ENCODE measurements at regions of chr12 and their contacts with region 1.

Region 1: GRCh38 chr12:2034633-2035430 is 18.0 kb upstream of the CACNA1C start:
- DNase-seq: peak; percentile 94
- H3K4me3 ChIP-seq: peak overlapping the region; percentile 3 to 41 (median 33)
- H3K27ac ChIP-seq: peak overlapping the region in 3 of 4 donors; percentile 77 to 87 (median 77)
- H3K4me1 ChIP-seq: peaks cover 0 to 74% (median 62%) of the 10 kb centered on the region in 4 donors
- H3K27me3 ChIP-seq: no peaks in the 10 kb centered on the region
- CTCF ChIP-seq: peak; percentile 64 to 94 (median 72)
- EP300 ChIP-seq: no peak
- POLR2A ChIP-seq: no peak

Region 2: DNA sequence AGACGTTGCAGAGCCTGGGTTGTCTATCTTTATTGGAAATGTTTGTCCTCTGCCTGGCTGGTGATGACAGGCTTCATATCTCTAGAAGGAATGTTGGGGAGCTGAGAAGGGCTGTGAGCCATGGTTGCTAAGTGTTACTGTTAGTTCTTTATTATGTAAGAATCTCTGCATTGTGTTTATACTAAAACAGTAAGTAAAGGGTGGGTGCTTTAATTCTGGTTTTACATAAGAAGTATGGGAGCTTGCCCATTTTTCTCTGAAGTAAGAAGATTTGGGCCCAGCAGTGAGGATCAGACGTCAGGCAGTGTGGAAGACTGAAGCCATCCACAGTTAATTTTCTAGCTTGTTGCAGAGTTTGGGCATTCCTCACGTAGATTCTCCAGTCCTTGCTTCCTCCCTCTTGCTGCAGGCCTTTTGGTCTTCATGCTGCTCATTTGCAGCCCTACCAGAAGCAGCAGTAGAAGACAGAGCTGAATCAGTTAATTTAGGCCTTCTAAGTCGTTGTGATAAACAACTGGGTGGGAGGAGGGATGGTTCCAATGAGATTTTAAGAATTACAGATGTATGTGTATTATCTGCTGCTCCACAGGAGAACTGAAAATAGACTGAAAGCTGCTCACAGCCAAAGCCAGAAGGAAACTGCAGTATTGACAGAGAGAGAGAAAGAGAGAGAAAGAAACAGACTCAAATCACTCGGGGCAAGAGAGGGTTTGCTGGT is 384.4 kb before region 1 on chr12:
- intact Hi-C with region 1: loop called (anchors 5 kb)
- DNase-seq: no peak
- H3K4me3 ChIP-seq: no peak overlapping the region
- H3K27ac ChIP-seq: peak overlapping the region; percentile 67 to 78 (median 76)
- H3K4me1 ChIP-seq: peaks cover 0 to 62% (median 53%) of the 10 kb centered on the region in 4 donors
- H3K27me3 ChIP-seq: no peaks in the 10 kb centered on the region
- CTCF ChIP-seq: no peak
- EP300 ChIP-seq: no peak
- POLR2A ChIP-seq: no peak

Region 3: GRCh38 chr12:1661553-1662335 is 373.1 kb before region 1 on chr12:
- intact Hi-C with region 1: loop called (anchors 5 kb)
- DNase-seq: peak; percentile 97
- H3K4me3 ChIP-seq: peak overlapping the region; percentile 38 to 55 (median 44)
- H3K27ac ChIP-seq: peak overlapping the region; percentile 84 to 95 (median 89)
- H3K4me1 ChIP-seq: peaks cover 0 to 29% (median 13%) of the 10 kb centered on the region in 4 donors
- H3K27me3 ChIP-seq: no peaks in the 10 kb centered on the region
- CTCF ChIP-seq: no peak
- EP300 ChIP-seq: no peak
- POLR2A ChIP-seq: peak; percentile 6 to 34

Region 4: DNA sequence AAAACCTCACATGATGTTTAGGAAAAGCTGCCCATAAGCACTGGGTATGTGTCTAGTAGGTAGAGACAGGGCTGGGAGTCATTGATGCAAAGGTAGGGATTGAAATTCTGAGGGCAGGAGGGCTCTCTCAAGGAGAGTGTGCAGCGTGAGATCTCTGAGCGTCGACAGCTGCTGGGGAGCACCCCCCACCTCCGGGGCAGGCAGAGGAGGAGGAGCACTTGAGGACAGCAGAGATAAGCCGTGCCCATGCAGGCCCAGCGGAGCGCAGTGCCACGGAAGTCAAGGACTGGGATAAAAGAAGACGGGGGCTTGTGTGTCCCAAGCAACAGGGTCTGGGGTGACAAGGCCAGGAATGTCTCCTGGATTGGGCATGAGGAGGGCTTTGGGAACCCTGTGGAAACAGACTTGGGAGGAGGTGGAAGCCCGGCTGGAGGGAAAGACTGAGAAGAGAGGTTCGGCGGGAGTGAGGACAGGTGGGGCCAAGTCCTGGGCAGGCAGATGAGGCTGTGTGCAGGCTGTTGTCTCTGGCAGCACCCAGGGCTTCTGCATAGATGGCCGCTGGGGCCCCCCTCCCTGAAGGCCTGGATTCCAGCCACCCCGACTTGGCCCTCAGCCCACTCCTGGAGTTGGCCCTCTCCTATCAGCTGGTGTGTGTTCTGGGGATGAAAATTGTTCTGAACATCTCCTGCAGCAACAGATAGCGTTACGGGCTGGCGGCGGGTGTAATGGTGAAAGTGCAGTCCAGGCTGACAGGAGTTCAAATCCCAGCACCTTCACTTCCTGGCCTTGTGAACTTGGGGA is 118.3 kb before region 1 on chr12:
- intact Hi-C with region 1: no loop called
- DNase-seq: peak; percentile 85
- H3K4me3 ChIP-seq: no peak overlapping the region
- H3K27ac ChIP-seq: peak overlapping the region in 1 of 4 donors; percentile 49
- H3K4me1 ChIP-seq: peaks cover 0 to 16% (median 12%) of the 10 kb centered on the region in 4 donors
- H3K27me3 ChIP-seq: no peaks in the 10 kb centered on the region
- CTCF ChIP-seq: no peak
- EP300 ChIP-seq: no peak
- POLR2A ChIP-seq: no peak

Region 5: DNA sequence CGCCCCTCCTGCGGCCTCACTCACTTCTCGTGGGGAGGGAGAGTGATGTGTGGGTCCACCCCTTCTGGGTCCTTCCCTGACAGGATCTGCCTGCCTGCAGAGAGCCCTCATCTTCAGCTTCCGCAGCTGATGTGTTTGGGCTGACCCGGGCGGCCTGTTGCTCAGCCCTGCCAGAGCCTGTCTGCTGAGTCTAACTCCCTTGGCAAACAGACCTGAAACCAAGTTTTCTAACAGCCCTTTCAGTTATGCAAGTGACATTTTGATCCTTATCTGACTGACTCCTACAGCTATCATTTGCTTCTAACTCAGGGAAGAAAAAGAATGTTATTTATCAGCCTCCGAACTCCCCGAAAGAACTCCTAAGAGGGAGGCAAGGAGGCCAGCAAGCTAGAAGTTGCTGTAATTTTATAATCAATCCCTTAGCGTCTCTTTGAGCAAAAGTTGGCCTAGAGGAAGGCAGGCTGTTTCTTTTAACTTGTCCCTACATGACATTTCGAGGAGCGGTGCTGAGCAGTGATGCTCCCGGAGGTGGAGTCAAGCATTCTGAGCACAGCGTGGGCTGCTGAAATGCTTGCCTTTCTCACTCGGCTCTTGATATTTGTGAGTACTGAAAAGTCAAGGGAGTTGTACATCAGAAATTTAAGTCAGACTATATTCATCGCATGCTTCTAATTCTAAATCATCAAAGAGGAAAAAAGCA is 84.9 kb before region 1 on chr12:
- intact Hi-C with region 1: loop called (anchors 5 kb)
- DNase-seq: peak; percentile 88
- H3K4me3 ChIP-seq: no peak overlapping the region
- H3K27ac ChIP-seq: peak overlapping the region; percentile 75 to 91 (median 84)
- H3K4me1 ChIP-seq: peaks cover 0 to 50% (median 40%) of the 10 kb centered on the region in 4 donors
- H3K27me3 ChIP-seq: no peaks in the 10 kb centered on the region
- CTCF ChIP-seq: no peak
- EP300 ChIP-seq: peak in 2 of 4 donors; percentile 1 to 5
- POLR2A ChIP-seq: no peak

Region 6: DNA sequence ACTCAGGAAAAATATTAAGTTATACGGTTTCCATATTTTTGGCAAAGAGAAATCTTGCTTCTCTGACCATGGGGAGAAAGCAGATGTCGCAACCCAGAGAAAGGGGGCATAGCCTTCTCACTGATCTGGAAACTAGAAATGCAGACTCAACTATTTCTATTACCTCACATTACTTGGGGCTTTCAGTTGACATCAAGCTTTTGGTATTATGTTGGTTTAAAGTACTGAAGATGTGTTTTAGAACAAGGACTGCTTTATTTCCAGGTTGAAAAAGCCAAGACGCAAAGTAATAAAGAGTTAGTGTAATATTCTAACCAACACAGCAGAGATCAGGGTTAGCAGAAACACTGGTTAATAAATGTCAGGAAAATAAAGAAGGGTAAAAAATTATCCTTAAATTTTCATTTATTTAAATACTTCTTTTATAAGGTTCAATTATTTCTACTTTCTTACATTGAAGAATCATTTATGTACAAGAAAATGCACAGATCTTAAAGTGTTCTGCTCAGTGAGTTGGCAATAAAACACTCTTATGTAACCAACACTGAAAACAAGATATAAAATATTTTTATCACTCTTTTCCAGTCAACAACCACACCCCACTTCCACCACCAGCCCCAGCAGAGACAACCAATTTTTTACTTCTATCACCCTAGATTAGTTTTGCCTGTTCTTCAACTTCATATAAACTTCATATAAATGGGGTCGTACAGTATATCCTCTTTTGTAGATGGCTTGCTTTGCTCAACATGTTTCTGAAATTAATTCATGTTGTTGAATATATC is 56.6 kb before region 1 on chr12:
- intact Hi-C with region 1: loop called (anchors 5 kb)
- DNase-seq: no peak
- H3K4me3 ChIP-seq: no peak overlapping the region
- H3K27ac ChIP-seq: peak overlapping the region; percentile 85 to 94 (median 86)
- H3K4me1 ChIP-seq: peaks cover 0 to 77% (median 65%) of the 10 kb centered on the region in 4 donors
- H3K27me3 ChIP-seq: no peaks in the 10 kb centered on the region
- CTCF ChIP-seq: no peak
- EP300 ChIP-seq: peak in 3 of 4 donors; percentile 31 to 37 (median 35)
- POLR2A ChIP-seq: no peak

Measured in sigmoid colon (tissue), 7 donors.